GM12878 (cell line): ENCODE measurements at regions of chr6 and their contacts with region 1.

Region 1: GRCh38 chr6:111737065-111737521 is 131.4 kb upstream of the TRAF3IP2 start:
- DNase-seq: no peak
- ATAC-seq: no peak
- H3K4me3 ChIP-seq: no peak overlapping the region
- H3K27ac ChIP-seq: 0 out of 2 replicates have a peak overlapping the region, but pooled peaks have one; percentile 6
- H3K4me1 ChIP-seq: peaks cover 80% of the 10 kb centered on the region
- H3K27me3 ChIP-seq: no peaks in the 10 kb centered on the region
- CTCF ChIP-seq: no peak
- EP300 ChIP-seq: no peak
- POLR2A ChIP-seq: no peak
- RAD21 ChIP-seq: no peak

Region 2: DNA sequence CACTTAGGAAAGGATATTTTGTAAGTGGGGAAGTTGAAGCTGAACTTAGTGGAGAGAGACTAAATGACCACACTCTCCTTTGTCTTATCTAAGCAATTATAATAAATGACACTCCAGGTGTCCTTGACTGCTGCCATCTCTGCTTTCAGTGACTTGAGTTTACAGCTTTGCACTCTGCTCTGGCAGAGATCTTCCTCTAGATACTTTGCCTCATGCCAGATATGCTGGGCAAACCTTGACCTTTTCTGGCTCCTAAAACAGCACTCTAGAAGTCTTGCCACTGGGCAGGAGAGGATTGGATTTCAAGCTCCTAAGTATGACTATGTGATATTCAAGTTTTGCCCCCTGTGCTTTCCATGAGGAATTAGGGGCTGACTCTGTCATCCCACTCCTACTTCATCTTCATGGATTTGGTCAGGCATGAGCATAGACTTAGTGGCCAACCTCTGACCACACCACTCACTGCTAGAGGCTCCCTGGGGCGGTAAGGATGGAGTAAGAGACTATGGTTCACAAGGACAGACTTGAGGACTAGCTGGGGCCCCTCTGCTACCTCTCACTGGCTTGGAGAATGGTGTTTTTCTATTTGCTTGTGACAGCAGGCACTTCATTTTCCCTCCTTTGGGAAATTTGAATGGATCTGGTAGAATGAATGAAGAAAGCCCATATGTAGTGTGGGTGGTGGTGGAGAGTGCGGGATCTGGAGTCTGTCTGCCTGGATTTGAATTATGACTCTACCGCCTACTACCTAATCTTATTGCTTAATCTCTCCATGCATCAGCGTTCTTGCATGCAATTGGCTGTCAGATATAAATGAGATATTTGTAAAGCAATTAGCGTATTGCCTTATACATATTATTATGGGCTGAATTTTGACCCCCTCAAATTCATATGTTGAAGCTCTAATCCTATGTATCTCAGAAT is 445.5 kb before region 1 on chr6:
- CTCF ChIA-PET with region 1: no interaction called
- POLR2A ChIA-PET with region 1: no interaction called
- RAD21 ChIA-PET with region 1: no interaction called
- SMC1A ChIA-PET with region 1: no interaction called
- in situ Hi-C with region 1: no loop called
- intact Hi-C with region 1: no loop called
- DNase-seq: no peak
- ATAC-seq: peak; percentile 29
- H3K4me3 ChIP-seq: no peak overlapping the region
- H3K27ac ChIP-seq: peak overlapping the region; percentile 27; the same call in 1 of the 2 replicates
- H3K4me1 ChIP-seq: peaks cover 14% of the 10 kb centered on the region
- H3K27me3 ChIP-seq: no peaks in the 10 kb centered on the region
- CTCF ChIP-seq: no peak
- EP300 ChIP-seq: no peak
- POLR2A ChIP-seq: no peak
- RAD21 ChIP-seq: no peak

Region 3: DNA sequence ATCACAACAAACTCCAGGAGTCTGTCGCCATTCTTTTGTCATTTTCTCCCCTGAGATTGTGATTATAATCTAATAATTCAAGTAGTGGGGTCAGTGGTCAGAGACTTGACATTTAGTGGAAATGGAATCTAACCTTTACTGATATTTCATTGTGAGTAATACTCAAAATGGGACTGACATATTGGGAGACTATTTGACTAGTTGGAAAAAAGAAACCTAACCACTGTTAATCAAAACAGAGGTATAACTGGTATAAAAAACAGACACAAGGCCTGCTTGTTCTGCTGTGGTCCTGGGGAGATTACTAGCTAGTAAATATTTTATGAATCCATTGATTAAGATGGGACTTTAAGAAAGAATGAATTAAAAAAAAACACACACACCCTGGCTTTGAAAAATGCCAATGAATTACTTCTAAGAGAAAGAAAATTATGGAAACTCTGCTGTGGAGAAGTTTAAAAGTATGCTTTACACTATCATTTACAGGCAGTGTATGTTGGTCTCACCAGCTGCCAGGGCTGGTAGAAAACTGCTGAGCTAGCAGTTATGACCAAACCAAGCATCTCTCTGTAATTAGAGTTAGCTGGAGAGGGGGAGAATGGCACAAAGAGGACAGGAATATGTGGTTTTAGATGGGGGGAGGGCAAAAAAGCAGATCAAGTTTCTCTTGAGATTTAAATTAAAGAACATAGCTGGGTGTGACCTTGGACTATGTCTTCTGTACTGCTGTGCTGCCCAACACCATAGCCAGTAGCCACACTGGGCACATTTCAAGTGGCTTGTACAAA is 32.5 kb after region 1 on chr6:
- CTCF ChIA-PET with region 1: interaction called, 43 read pairs
- POLR2A ChIA-PET with region 1: interaction called, 69 read pairs
- RAD21 ChIA-PET with region 1: interaction called, 158 read pairs
- SMC1A ChIA-PET with region 1: interaction called, 156 read pairs
- in situ Hi-C with region 1: no loop called
- intact Hi-C with region 1: loop called (anchors 1 kb)
- DNase-seq: no peak
- ATAC-seq: no peak
- H3K4me3 ChIP-seq: no peak overlapping the region
- H3K27ac ChIP-seq: peak overlapping the region; percentile 93
- H3K4me1 ChIP-seq: peaks cover 57% of the 10 kb centered on the region
- H3K27me3 ChIP-seq: no peaks in the 10 kb centered on the region
- CTCF ChIP-seq: no peak
- EP300 ChIP-seq: no peak
- POLR2A ChIP-seq: no peak
- RAD21 ChIP-seq: no peak

Region 4: DNA sequence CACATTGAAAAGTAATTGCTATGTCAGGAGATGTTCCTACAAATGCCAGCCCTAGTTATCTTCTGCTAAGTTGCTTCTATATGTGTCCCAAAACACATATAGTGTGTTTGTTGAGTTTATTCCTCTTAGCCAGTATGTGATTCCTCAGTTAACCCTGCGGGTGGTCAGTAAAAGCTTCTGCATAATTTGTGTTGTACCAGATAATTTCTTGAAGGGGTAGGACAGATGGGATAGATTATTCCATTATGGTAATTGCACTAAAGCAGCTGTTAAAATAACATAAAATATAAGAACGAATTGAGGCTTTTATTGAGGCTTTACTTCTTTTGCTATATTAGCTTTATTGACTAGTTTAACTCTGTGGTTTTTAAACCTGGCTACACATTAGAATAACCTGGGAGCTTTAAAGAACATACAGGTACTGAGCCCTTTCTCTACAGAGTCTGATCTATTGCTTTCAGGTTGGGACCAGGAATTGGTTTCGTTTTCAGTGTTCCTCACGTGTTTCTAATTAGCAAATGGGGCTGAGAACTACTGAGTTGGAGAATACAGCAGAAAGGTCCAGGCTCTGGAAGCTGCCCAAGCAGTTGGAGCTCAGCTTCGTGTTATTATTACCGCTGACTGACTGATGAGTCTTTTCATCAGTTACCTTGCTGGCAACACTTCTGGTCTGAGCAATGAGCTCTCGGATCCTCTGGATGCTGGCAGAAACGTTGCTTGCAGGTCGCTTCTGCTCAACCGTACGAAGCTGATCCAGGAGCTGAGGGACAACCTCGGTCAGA is 407.2 kb after region 1 on chr6:
- CTCF ChIA-PET with region 1: no interaction called
- POLR2A ChIA-PET with region 1: no interaction called
- RAD21 ChIA-PET with region 1: no interaction called
- SMC1A ChIA-PET with region 1: no interaction called
- in situ Hi-C with region 1: no loop called
- intact Hi-C with region 1: no loop called
- DNase-seq: no peak
- ATAC-seq: peak; percentile 54
- H3K4me3 ChIP-seq: no peak overlapping the region
- H3K27ac ChIP-seq: no peak overlapping the region
- H3K4me1 ChIP-seq: no peaks in the 10 kb centered on the region
- H3K27me3 ChIP-seq: peaks cover 0 to 3% of the 10 kb centered on the region in 2 experiments; a peak in 2 of 4 replicates
- CTCF ChIP-seq: no peak
- EP300 ChIP-seq: no peak
- POLR2A ChIP-seq: no peak
- RAD21 ChIP-seq: no peak